Head of caudate nucleus (tissue), 42 donors: ENCODE measurements at regions of chr20 and their contacts with region 1.

Region 1: GRCh38 chr20:18632196-18633009 is 44.5 kb downstream of the DTD1 start:
- DNase-seq: peak; percentile 67 to 91 (median 83)

Region 2: DNA sequence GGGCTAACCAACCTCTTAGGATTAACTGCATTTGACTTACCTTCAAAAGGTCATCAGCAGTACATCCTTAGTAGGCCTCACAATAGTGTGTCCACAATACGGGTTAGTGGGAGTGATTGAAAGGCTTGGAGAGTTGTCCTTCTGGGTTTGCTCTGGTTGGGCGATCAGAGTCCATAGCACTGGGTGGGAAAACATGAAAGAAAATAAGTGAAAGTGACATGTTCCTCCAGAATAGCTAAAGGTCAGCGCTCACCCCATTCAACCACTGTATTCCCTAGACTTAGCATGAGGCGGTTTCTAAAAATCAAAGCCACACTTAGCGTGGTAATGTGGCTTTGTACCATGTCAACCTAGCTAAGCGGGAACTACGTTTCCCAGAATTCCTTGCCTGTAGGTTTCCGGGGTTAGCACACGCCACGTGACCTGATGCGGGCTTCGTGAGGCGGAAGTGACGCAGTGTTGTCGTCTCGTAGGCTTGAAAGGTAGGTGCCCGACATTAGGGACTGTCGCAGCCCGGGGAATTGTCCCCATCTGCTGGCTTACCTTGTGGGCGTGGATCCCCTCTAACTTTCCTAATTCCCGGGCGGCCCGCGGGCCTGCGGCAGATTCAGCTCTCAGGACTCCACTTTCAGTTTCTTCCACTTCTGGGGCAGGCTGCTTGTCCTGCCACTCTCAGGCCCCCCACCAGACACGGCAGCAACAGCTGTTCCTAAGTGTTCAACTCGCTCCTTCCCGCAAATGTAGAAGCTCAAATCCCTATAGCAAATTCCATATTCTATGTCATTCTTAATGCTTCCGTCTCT is 161.4 kb after region 1 on chr20:
- intact Hi-C with region 1: loop called (anchors 10 kb)
- DNase-seq: peak; percentile 89 to 97 (median 94)

Region 3: GRCh38 chr20:19661717-19662636 is 1029.6 kb after region 1 on chr20:
- intact Hi-C with region 1: loop called (anchors 10 kb)
- DNase-seq: peak; percentile 46 to 90 (median 74)